Activated CD4-positive, alpha-beta T cell treated with anti-CD3 and anti-CD28 coated beads for 36 hours (primary cell): ENCODE measurements at regions of chr10 and their contacts with region 1.

Region 1: DNA sequence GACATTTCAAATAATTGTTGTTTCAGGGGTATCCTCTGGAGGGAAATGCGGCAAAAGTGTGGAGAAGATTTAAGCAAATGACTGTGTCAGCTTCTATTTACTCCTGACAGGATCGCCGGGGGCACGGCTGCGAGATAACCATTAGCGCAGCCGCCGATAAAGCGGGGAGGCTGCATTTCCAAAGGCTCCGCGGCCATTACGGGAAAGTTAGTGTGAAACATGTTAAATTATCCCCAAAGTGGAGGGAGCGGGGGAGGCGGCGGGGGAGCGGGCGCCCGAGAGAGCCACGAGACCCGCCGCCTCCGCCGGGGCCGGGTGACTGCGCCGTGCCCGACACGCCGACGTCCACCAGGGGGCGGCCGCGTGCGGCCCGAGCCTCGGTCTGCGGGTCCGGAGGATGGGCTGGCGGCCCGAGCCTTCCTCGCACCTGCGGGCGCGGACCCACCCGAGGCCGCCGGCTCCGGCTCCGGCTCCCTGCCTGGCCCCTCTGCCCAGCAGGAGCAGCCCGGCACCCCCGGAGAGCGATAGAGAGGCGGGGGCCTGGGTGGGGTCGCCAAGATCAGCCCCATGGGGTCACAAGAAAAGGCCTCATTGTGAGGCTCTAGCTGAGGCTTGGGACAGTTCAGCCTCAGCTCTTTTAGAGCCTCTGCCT is 74.4 kb upstream of the PAX2 start:
- DNase-seq: peak; percentile 81
- ATAC-seq: peak; percentile 95
- H3K4me3 Mint-ChIP-seq: no peak overlapping the region
- H3K27ac Mint-ChIP-seq: no peak overlapping the region
- H3K4me1 Mint-ChIP-seq: peaks cover 3% of the 10 kb centered on the region
- H3K27me3 Mint-ChIP-seq: peaks cover 64% of the 10 kb centered on the region

Region 2: DNA sequence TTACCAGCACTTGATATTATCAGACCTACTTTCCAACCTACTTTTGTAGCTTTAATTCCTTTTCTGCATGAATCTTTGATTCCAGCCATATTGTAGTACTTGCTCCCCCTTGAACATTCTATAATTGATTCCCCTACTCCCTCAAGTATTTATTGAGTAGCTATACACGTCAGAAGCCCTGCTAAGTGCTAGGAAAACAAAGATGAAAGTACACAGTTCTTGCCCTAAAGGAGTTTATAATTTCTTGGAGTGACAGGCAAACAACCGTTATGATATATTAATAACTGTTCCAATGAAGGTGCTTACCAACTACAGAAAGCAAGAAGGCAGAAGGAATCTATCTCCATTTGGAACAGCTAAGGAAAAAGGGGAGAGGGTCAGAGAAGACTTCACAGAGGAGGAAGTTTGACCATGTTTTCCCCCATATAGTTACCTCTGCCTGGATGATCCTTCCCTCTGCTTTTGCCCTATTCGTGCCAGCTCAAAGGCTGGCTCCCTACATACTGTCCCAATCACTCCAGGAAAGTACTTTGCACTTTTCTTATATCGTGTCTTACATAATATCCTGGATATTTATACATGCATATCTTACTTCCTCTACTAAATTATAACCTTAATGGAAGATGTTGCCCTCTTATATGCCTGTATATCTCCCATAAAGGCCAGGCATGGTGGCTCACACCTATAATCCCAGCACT is 269.2 kb before region 1 on chr10:
- CTCF ChIA-PET with region 1: no interaction called
- POLR2A ChIA-PET with region 1: no interaction called
- intact Hi-C with region 1: no loop called
- DNase-seq: no peak
- ATAC-seq: no peak
- H3K4me3 Mint-ChIP-seq: no peak overlapping the region
- H3K27ac Mint-ChIP-seq: no peak overlapping the region
- H3K4me1 Mint-ChIP-seq: no peaks in the 10 kb centered on the region
- H3K27me3 Mint-ChIP-seq: no peaks in the 10 kb centered on the region

Region 3: DNA sequence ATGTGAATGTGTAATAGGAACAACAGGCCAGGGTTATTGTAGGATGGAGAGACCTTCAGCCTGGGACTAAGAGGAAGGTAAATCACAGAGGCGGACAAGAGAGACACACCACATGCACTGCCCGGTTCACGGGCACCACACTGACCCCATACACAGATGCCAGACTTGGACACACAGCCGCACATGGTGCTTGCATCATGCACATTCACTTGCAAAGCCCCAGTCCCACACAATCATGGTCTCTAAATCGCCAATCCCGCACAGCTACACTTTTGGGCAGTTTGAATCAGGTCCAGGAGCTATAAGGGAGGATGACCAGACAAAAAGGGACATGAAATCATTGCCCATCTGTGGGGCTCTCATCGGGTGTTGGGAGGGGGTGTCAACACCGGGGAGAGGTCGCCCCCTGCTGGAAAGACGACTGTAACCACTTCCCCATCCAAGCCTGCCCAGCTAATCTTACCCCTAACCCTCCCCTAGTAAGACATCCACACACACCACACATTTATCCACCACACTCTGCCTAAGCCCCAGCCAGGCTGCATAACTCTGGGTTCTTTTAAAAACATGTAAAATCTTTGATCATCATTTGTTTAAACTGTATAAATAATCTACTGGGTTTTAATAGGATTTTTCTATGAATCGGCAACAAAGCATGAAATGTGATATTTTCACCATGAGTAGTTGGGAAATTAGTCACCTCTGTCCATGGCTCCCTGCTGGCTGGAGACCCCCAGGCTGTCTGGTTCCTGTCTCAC is 201.3 kb after region 1 on chr10:
- CTCF ChIA-PET with region 1: interaction called, 4 read pairs
- POLR2A ChIA-PET with region 1: no interaction called
- intact Hi-C with region 1: loop called in 1 of 2 experiments (anchors 1 kb)
- DNase-seq: peak; percentile 89
- ATAC-seq: peak; percentile 97
- H3K4me3 Mint-ChIP-seq: no peak overlapping the region
- H3K27ac Mint-ChIP-seq: no peak overlapping the region
- H3K4me1 Mint-ChIP-seq: no peaks in the 10 kb centered on the region
- H3K27me3 Mint-ChIP-seq: peaks cover 9% of the 10 kb centered on the region